ENCODE measurements at regions of chr7 and their contacts with region 1.

Region 1: DNA sequence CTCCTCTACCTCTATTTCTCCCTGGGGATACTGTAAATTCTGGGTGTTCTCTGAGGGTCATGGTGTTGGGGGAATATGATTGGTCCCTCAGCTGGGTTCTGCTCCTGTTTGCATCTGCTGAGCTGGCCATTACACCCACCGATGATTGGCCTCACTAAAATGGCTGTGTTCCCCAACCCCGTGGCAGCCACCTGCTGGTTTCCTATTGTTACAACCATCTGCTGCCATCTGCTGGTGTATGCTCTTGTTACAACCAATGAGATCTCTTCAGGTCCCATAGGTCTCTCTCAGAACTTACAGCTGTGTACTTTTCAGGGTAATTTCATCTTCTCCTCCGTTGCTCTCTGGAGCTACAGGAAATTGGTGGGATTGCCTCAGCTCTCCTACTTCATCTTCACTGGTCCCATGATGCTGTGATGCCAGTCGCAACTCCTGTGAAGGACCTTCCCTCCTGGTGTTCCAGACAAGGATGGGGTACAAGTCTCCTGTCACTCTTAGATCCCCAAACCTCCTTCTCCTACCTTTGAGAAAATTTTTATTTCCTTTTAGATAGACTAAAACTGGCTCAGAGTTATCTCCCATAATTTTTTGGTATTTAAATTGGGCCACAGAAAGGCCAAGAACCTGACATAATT is 303.5 kb upstream of the SMIM30 start:
- DNase-seq: peak; percentile 67
- ATAC-seq: peak; percentile 91 to 95
- H3K4me3 ChIP-seq: no peak overlapping the region
- H3K27ac ChIP-seq: no peak overlapping the region
- H3K4me1 ChIP-seq: no peaks in the 10 kb centered on the region
- H3K27me3 ChIP-seq: no peaks in the 10 kb centered on the region
- CTCF ChIP-seq: peak; percentile 74

Region 2: DNA sequence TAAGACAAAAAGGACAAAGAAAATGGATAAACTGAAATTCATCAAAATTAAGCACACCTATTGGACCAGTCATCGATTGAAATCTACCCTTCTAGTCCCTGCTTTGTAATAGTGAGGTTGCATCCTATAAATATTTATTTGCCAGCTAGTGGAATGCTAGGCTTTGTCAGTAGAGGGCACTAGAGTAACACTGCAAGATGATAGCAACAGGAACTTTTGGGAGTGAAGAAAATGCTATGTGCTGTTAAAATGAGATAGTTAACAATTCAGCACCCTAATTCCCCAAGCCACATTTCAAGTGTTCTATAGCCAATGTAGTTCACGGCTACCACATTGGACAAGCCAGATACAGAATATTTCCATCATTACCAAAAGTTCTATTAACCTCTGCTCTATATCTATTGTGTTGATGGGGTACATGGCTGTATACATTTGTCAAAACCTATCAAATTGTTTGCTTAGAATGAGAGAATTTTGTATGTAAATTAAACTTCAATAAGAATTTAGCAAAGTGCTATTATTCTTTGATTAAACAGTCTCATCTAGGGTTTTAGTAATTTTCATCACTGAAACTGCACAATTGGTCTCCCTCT is 871.2 kb before region 1 on chr7:
- intact Hi-C with region 1: loop called (anchors 5 kb)
- DNase-seq: no peak
- ATAC-seq: peak; percentile 76 to 78
- H3K4me3 ChIP-seq: no peak overlapping the region
- H3K27ac ChIP-seq: no peak overlapping the region
- H3K4me1 ChIP-seq: no peaks in the 10 kb centered on the region
- H3K27me3 ChIP-seq: no peaks in the 10 kb centered on the region
- CTCF ChIP-seq: peak; percentile 88

Region 3: GRCh38 chr7:113015032-113015645 is 406.7 kb before region 1 on chr7:
- intact Hi-C with region 1: loop called (anchors 10 kb)
- DNase-seq: no peak
- ATAC-seq: peak in 1 of 2 donors; percentile 50
- H3K4me3 ChIP-seq: no peak overlapping the region
- H3K27ac ChIP-seq: no peak overlapping the region
- H3K4me1 ChIP-seq: no peaks in the 10 kb centered on the region
- H3K27me3 ChIP-seq: no peaks in the 10 kb centered on the region
- CTCF ChIP-seq: peak; percentile 52

Region 4: GRCh38 chr7:113561446-113561845 is 139.6 kb after region 1 on chr7:
- intact Hi-C with region 1: no loop called
- DNase-seq: no peak
- ATAC-seq: no peak
- H3K4me3 ChIP-seq: no peak overlapping the region
- H3K27ac ChIP-seq: no peak overlapping the region
- H3K4me1 ChIP-seq: no peaks in the 10 kb centered on the region
- H3K27me3 ChIP-seq: no peaks in the 10 kb centered on the region
- CTCF ChIP-seq: no peak